Esophagus squamous epithelium (tissue), 5 donors: ENCODE measurements at regions of chr11 and their contacts with region 1.

Region 1: DNA sequence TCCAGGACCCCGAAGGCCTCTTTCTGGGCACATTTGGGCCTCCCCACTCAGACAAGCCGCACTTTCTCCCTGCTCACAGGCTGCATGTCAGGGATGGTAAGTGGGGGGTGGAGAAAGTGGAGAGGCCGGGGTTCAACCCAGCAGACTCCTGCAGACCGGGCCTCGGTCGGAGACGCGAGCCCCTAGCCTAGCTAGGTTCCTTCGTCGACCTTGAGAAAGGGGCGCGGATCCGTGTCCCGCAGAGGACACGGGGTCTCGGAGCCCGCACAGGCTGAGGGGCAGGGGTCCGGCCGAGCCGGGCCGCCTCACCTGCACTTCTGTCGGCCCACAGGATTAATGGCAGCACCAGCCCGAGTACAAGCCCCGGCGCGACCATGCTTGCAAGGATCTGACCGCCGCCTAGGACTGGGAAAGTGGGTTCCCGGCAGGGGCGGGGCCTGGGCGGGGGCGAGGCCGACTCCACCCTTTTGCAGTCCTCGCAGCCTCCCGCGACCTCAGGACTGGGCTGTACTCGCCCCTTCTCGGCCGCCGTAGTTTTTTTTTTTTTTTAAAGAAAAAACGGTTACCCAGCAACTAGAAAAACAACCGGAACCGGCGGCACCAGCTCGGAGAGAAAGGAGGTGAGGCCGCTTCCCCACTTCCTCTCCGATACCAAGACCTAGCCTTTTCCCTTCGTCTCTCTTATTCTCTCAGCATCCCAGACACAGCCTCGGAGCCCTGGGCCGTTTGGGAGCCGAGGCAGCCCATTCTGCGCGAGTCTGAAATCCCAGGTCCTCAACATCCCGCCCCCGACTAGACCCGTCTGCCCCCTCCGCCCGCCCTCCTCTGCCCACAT is at the starts of genes SIAE and SPA17:
- DNase-seq: peak; percentile 90
- H3K4me3 ChIP-seq: peak within 1 kb of the TSS; percentile 62 to 86 (median 77)
- H3K27ac ChIP-seq: peak within 1 kb of the TSS; percentile 85 to 91 (median 90)
- H3K4me1 ChIP-seq: peaks cover 7 to 41% (median 17%) of the 10 kb centered on the region in 3 donors
- H3K27me3 ChIP-seq: no peaks in the 10 kb centered on the region
- CTCF ChIP-seq: peak in 1 of 6 experiments; percentile 10
- POLR2A ChIP-seq: peak in 2 of 4 donors; percentile 28 to 54
- total RNA-seq, gene SIAE: 5.7 to 19.6 (median 8.0) TPM
- total RNA-seq, gene SPA17: 2.3 to 8.5 (median 6.0) TPM

Region 2: GRCh38 chr11:124739479-124740276 is 66.1 kb after region 1 on chr11 and contains the start of gene NRGN:
- intact Hi-C with region 1: loop called (anchors 5 kb)
- DNase-seq: peak; percentile 49
- H3K4me3 ChIP-seq: peak within 1 kb of the TSS; percentile 36 to 78 (median 54)
- H3K27ac ChIP-seq: peak within 1 kb of the TSS in 2 of 4 donors; percentile 54 to 62
- H3K4me1 ChIP-seq: peaks cover 13 to 20% (median 17%) of the 10 kb centered on the region in 3 donors
- H3K27me3 ChIP-seq: peaks cover 0 to 64% (median 0%) of the 10 kb centered on the region in 4 donors
- CTCF ChIP-seq: no peak
- POLR2A ChIP-seq: no peak
- total RNA-seq, gene NRGN: 0.83 to 5.0 (median 1.5) TPM

Region 3: GRCh38 chr11:124763156-124763947 is 89.8 kb after region 1 on chr11:
- intact Hi-C with region 1: loop called (anchors 5 kb)
- DNase-seq: peak; percentile 20
- H3K4me3 ChIP-seq: peak overlapping the region; percentile 32 to 77 (median 55)
- H3K27ac ChIP-seq: peak overlapping the region; percentile 43 to 91 (median 80)
- H3K4me1 ChIP-seq: peaks cover 22 to 57% (median 27%) of the 10 kb centered on the region in 3 donors
- H3K27me3 ChIP-seq: peaks cover 6 to 50% (median 20%) of the 10 kb centered on the region in 4 donors
- CTCF ChIP-seq: peak; percentile 35 to 76 (median 71)
- POLR2A ChIP-seq: no peak

Region 4: DNA sequence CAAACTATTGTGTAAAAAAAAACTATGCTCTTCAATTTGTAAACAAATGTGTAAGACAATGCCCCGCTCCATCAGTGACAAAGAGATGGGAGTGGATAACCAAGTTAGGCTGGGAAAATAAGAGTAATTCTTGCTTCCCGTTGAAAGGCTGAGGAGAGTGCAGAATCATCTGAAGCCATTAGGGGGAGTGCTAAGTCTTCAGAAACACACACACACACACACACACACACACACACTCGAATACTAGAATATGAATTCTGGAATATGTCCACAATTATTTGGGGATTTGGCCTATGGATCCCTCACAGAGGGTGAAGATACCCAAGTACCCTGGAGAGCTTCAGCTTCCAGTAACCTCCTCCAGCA is 163.9 kb after region 1 on chr11:
- intact Hi-C with region 1: loop called (anchors 10 kb)
- DNase-seq: no peak
- H3K4me3 ChIP-seq: no peak overlapping the region
- H3K27ac ChIP-seq: no peak overlapping the region
- H3K4me1 ChIP-seq: peaks cover 11 to 31% (median 15%) of the 10 kb centered on the region in 3 donors
- H3K27me3 ChIP-seq: peaks cover 20 to 62% (median 29%) of the 10 kb centered on the region in 4 donors
- CTCF ChIP-seq: peak in 2 of 6 experiments; percentile 16 to 53
- POLR2A ChIP-seq: no peak